ENCODE measurements at regions of chr5 and their contacts with region 1.

Region 1: GRCh38 chr5:88729084-88729828 is 153.7 kb downstream of the MEF2C start:
- DNase-seq: peak; percentile 71
- ATAC-seq: peak; percentile 63
- H3K4me3 Mint-ChIP-seq: no peak overlapping the region
- H3K27ac Mint-ChIP-seq: no peak overlapping the region
- H3K4me1 Mint-ChIP-seq: peaks cover 3% of the 10 kb centered on the region
- H3K27me3 Mint-ChIP-seq: peaks cover 9% of the 10 kb centered on the region

Region 2: GRCh38 chr5:87780831-87781760 is 948.2 kb before region 1 on chr5:
- CTCF ChIA-PET with region 1: interaction called, 19 read pairs
- POLR2A ChIA-PET with region 1: no interaction called
- intact Hi-C with region 1: no loop called
- DNase-seq: peak; percentile 88
- ATAC-seq: peak; percentile 96
- H3K4me3 Mint-ChIP-seq: no peak overlapping the region
- H3K27ac Mint-ChIP-seq: no peak overlapping the region
- H3K4me1 Mint-ChIP-seq: no peaks in the 10 kb centered on the region
- H3K27me3 Mint-ChIP-seq: peaks cover 18% of the 10 kb centered on the region

Region 3: DNA sequence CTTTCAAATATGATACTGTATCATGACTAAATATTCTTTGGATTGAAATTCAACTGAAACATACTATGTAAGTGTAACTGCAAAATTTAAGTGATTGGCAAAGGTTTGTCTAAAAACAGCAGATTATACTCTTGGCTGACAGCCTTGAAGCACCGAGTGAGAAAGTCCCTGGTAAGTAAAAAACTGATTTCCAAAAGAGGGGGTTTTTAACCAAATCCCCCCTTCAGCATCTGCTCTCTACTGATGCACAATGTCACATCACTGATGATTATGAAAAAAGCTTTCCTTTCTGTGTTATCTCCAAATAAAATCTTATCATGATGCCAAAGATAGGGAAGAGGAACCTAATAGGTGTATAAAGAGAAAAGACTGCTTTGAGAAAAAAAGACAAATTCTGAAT is 12.7 kb after region 1 on chr5:
- CTCF ChIA-PET with region 1: interaction called, 37 read pairs
- POLR2A ChIA-PET with region 1: no interaction called
- intact Hi-C with region 1: no loop called
- DNase-seq: no peak
- ATAC-seq: no peak
- H3K4me3 Mint-ChIP-seq: no peak overlapping the region
- H3K27ac Mint-ChIP-seq: no peak overlapping the region
- H3K4me1 Mint-ChIP-seq: no peaks in the 10 kb centered on the region
- H3K27me3 Mint-ChIP-seq: peaks cover 19% of the 10 kb centered on the region

Region 4: GRCh38 chr5:88785391-88786219 is 56.3 kb after region 1 on chr5:
- CTCF ChIA-PET with region 1: interaction called, 4 read pairs
- POLR2A ChIA-PET with region 1: no interaction called
- intact Hi-C with region 1: loop called in 1 of 2 experiments (anchors 5 kb)
- DNase-seq: peak; percentile 30
- ATAC-seq: peak; percentile 89
- H3K4me3 Mint-ChIP-seq: no peak overlapping the region
- H3K27ac Mint-ChIP-seq: no peak overlapping the region
- H3K4me1 Mint-ChIP-seq: peaks cover 17% of the 10 kb centered on the region
- H3K27me3 Mint-ChIP-seq: peaks cover 12% of the 10 kb centered on the region

Region 5: DNA sequence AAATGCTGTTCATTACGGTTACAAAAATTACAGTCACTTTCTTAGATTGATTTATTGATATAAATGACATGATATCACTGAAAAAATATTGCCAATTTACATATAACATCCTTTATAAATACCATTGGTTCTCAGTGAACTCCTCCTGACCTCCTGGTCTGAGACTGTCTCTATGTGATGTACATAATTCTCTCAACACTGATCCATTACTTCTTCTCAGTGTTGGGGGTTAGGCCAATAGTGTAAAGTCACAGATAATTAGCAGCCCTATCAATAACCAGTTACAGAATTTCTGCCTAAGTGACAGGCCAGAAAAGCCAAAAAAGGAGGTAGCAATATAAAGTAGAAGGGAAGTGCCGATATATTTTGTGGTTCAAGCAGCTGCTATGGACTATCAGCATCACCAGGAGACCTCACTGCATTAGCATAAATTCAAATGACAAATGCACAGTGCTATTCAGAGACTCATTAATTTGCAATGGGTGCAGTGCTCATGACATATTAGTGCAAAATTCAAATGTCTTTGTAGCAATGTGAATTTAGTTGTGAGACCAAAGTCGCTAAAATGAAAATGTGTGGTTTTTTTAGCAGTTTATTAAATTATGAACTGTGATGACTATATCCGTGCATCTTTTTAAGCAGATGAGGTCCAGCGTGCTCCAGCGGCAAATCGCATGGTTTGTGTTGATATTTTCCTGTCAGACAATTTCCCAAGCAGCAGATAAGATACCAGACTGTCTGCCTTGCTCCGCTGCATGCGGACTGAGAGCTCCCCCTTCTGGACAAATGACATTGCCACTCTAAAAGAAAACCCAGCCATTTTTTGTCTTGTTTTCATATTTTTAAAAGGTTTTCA is 1535.7 kb after region 1 on chr5:
- CTCF ChIA-PET with region 1: interaction called, 74 read pairs
- POLR2A ChIA-PET with region 1: no interaction called
- intact Hi-C with region 1: loop called in 1 of 2 experiments (anchors 1 kb)
- DNase-seq: peak; percentile 72
- ATAC-seq: peak; percentile 53
- H3K4me3 Mint-ChIP-seq: no peak overlapping the region
- H3K27ac Mint-ChIP-seq: no peak overlapping the region
- H3K4me1 Mint-ChIP-seq: no peaks in the 10 kb centered on the region
- H3K27me3 Mint-ChIP-seq: peaks cover 8% of the 10 kb centered on the region

Region 6: DNA sequence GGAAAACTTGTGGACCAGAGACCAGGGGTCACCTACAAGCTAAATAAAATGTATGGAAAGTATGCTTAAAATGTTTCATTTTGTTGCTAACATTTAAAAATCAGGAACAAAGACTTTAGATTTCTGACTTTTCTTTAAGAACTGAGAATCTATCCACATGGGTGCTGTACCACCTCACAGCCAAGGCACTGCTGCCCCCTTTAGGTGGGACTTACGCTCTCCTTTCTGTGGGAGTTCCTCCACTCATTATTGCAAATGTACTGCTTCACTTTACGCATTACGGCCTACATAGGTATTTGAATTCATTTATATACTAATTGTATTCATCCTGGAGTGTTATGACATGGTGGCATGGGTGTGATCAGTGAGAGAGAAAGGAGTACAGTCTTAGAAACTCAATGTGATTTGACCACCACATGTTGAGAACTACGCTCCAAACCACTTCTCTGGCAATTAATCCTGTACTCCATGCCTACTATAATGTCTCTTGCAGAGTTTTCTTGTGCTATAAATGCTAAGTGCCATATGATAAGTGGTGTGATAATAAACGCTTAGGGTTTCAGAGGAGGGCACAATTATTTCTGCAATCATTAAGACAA is 1705.0 kb after region 1 on chr5:
- CTCF ChIA-PET with region 1: interaction called, 3 read pairs
- POLR2A ChIA-PET with region 1: no interaction called
- intact Hi-C with region 1: loop called (anchors 5 to 10 kb)
- DNase-seq: peak; percentile 71
- ATAC-seq: peak; percentile 63
- H3K4me3 Mint-ChIP-seq: no peak overlapping the region
- H3K27ac Mint-ChIP-seq: no peak overlapping the region
- H3K4me1 Mint-ChIP-seq: no peaks in the 10 kb centered on the region
- H3K27me3 Mint-ChIP-seq: peaks cover 3% of the 10 kb centered on the region